Endothelial cell of umbilical vein (primary cell): ENCODE measurements at regions of chr13 and their contacts with region 1.

Region 1: DNA sequence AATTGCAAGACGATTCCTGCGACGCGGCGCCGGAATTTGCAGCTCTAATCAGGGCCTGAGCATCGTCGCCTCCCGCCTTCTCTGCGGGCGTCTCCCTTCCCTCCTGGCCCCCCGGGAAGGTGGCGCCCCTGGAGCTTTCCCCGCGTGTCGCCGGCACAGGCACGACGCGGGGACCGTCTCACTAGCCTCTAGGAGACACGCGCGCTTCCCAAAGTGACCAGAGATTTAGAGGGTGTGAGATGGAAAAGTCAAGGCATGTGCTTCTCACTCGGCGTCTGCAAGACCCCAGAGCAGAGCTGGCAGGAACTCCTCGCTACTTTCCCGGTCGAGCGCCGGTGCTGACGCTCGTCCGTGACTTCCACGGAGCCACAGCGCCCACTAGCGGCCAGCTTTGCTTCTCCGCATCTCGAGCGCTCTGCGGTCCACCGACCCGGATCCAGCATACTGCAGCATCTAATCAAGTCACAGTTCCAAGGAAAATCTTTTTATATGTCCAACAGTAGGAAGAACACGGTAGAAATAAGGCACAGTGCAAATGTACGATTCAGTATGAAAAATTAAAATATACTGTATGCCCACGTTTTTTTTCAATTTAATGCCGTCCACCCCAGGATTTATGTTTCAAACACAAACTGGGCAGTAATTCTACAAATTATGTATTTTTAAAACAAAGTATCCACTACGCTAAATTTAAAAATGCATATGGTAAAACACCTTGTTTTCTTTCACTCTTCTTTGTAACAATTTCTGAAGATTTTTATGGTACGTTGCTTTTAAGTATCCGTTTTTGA is 977 bp upstream of the EFNB2 start:
- DNase-seq: peak; percentile 94
- H3K4me3 ChIP-seq: peak overlapping the region; percentile 16 to 54 (median 53)
- H3K27ac ChIP-seq: peak overlapping the region; percentile 35
- H3K4me1 ChIP-seq: peaks cover 37% of the 10 kb centered on the region
- H3K27me3 ChIP-seq: no peaks in the 10 kb centered on the region
- CTCF ChIP-seq: peak; percentile 95 to 96
- POLR2A ChIP-seq: no peak

Region 2: DNA sequence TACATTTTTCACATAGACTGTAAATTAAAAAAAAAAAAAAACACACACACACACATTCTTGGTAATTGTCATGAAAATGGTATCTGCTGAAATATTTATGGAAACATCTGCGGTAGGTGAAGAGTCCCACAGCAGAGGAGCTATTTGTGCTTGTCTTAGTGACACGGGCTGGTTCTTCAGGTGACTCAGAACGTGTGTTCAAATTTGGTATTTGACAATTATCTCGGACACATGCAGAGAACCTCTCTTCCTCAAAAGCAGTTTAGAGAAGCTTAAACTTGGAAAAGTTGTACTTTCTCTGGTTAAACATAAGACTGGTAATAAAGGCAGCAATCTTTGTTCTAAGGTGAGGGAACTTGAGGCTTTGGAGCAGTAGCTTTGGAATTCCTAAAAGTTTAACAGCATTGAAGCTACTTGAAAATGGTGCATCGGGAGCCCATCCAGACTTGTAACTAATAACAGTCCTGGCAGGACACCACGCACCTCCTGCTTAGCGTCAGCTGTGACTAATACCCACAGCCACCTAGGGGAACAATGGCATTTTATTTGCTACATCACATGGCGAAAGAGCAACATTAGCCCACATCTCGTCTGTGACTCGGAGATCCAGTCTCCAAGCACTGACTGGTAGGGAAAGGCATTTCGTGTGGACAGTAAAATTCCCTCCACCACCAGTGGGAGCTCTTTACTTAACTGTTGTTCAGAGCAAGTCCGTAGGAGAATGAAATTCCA is 1965.1 kb before region 1 on chr13:
- CTCF ChIA-PET with region 1: interaction called, 45 read pairs
- POLR2A ChIA-PET with region 1: no interaction called
- dilution Hi-C with region 1: no loop called
- intact Hi-C with region 1: loop called (anchors 1 kb)
- DNase-seq: peak; percentile 89
- H3K4me3 ChIP-seq: no peak overlapping the region
- H3K27ac ChIP-seq: peak overlapping the region; percentile 4
- H3K4me1 ChIP-seq: no peaks in the 10 kb centered on the region
- H3K27me3 ChIP-seq: no peaks in the 10 kb centered on the region
- CTCF ChIP-seq: peak; percentile 73 to 76
- POLR2A ChIP-seq: no peak

Region 3: GRCh38 chr13:105202354-105202753 is 1334.1 kb before region 1 on chr13:
- CTCF ChIA-PET with region 1: interaction called, 10 read pairs
- POLR2A ChIA-PET with region 1: no interaction called
- dilution Hi-C with region 1: no loop called
- intact Hi-C with region 1: no loop called
- DNase-seq: peak; percentile 69
- H3K4me3 ChIP-seq: no peak overlapping the region
- H3K27ac ChIP-seq: no peak overlapping the region
- H3K4me1 ChIP-seq: no peaks in the 10 kb centered on the region
- H3K27me3 ChIP-seq: no peaks in the 10 kb centered on the region
- CTCF ChIP-seq: peak; percentile 51 to 70
- POLR2A ChIP-seq: no peak

Region 4: DNA sequence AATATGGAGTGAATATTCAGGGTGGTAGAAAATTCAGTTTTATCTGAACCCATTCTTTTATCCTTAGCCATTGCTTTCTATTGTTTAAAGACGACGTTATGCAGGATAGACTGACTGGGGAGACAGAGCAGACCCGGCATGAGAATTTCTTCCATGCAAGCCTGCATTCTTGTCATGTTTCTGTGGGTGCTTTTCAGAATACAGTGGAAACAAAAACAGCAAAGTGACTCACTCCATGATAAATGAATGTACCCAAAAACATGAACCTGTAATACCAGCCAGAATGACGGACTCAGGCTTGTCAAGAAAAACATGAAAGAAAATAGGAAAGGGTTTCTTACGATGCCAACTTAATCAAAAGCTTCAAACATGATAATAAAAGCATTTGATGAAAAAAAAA is 925.0 kb before region 1 on chr13:
- CTCF ChIA-PET with region 1: no interaction called
- POLR2A ChIA-PET with region 1: no interaction called
- dilution Hi-C with region 1: no loop called
- intact Hi-C with region 1: loop called (anchors 10 kb)
- DNase-seq: peak; percentile 72
- H3K4me3 ChIP-seq: no peak overlapping the region
- H3K27ac ChIP-seq: no peak overlapping the region
- H3K4me1 ChIP-seq: no peaks in the 10 kb centered on the region
- H3K27me3 ChIP-seq: no peaks in the 10 kb centered on the region
- CTCF ChIP-seq: no peak
- POLR2A ChIP-seq: no peak

Region 5: DNA sequence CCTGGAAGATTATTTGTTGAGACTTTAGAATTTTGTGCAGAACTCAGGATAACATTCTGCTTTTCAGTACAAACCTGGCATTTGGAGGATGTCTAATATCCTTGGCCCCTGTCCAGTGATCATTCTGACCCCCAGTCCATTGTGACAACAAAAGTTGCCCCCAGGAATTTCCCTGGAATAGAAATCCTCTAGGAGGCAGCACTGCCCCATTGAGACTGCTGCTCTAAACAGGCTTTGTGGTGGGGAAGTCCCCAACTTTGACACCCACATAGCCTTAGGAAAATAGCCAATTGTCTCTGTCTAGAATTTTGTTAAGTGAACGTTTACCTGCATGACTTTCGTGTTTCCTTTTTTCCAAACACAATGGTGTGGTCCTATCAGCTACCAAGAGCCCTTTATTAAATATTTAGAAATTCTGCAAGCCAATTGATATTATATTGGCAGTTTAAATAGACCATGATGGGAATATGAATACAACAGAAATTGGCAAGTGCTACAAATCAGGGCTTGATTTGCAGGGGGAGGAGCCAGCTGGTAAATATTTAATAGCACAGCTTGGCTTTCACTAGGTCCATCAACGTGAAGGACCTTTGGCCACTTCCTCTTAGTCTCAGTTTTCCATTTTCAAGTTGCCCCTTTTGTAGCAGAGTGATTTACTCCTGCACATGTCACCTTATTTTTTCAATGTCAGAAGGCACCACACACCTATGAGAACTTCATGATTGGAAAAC is 452.7 kb before region 1 on chr13:
- CTCF ChIA-PET with region 1: interaction called, 31 read pairs
- POLR2A ChIA-PET with region 1: no interaction called
- dilution Hi-C with region 1: no loop called
- intact Hi-C with region 1: loop called (anchors 1 kb)
- DNase-seq: peak; percentile 86
- H3K4me3 ChIP-seq: no peak overlapping the region
- H3K27ac ChIP-seq: no peak overlapping the region
- H3K4me1 ChIP-seq: no peaks in the 10 kb centered on the region
- H3K27me3 ChIP-seq: no peaks in the 10 kb centered on the region
- CTCF ChIP-seq: peak; percentile 71 to 77
- POLR2A ChIP-seq: no peak

Region 6: GRCh38 chr13:106619688-106620555 is 83.5 kb after region 1 on chr13:
- CTCF ChIA-PET with region 1: interaction called, 60 read pairs
- POLR2A ChIA-PET with region 1: no interaction called
- dilution Hi-C with region 1: no loop called
- intact Hi-C with region 1: loop called (anchors 1 kb)
- DNase-seq: peak; percentile 61
- H3K4me3 ChIP-seq: no peak overlapping the region
- H3K27ac ChIP-seq: no peak overlapping the region
- H3K4me1 ChIP-seq: peaks cover 9% of the 10 kb centered on the region
- H3K27me3 ChIP-seq: peaks cover 18 to 31% of the 10 kb centered on the region in 2 experiments
- CTCF ChIP-seq: peak; percentile 79 to 80
- POLR2A ChIP-seq: no peak

Region 7: DNA sequence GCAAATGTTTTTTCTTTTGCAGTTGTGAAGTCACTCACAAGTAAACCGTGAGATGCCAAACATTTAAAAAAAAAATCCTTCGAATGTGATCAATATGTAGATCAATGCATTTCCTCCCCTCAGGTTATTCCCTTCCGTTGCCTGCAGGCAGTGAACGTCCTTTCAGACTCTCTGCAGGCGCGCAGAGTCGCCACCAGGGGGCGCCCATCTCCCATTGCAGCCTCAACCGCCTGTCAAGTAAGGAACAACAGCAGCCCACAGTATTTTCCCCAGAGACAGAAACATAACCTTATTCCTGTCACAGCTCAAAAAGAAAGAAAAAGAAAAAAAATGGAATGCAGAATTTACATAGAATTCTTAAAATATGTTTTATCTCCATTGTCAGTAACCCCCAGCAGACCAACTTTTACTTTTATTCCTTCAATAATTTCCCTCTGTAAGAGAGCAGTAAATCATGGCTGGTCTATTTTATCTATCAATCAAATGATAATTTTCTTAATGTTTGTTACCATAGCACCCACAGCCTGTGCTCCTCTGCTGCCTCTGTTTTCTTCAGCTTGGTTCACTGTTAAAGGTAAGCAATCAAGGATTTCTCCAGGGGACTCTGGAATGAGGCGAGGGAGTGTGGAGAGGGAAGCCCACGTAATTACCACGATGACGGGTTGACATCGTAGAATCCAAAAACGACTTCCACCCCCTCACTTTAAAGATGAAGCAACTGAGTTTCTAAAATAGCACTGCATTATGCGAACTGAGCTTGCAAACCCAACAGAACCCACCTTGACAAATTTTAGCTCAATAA is 669.1 kb after region 1 on chr13:
- CTCF ChIA-PET with region 1: no interaction called
- POLR2A ChIA-PET with region 1: no interaction called
- dilution Hi-C with region 1: no loop called
- intact Hi-C with region 1: loop called (anchors 2 kb)
- DNase-seq: peak; percentile 71
- H3K4me3 ChIP-seq: no peak overlapping the region
- H3K27ac ChIP-seq: no peak overlapping the region
- H3K4me1 ChIP-seq: peaks cover 24% of the 10 kb centered on the region
- H3K27me3 ChIP-seq: no peaks in the 10 kb centered on the region
- CTCF ChIP-seq: peak; percentile 90 to 97
- POLR2A ChIP-seq: no peak